Cardiac septum (tissue), 1 donor: ENCODE measurements at regions of chr3 and their contacts with region 1.

Region 1: GRCh38 chr3:139111392-139112229 is 66.9 kb upstream of the PRR23C start:
- DNase-seq: peak; percentile 76

Region 2: GRCh38 chr3:139202226-139202958 is 90.8 kb after region 1 on chr3:
- intact Hi-C with region 1: loop called (anchors 5 kb)
- DNase-seq: no peak

Region 3: GRCh38 chr3:139329345-139329850 is 217.8 kb after region 1 on chr3:
- intact Hi-C with region 1: loop called (anchors 2 kb)
- DNase-seq: peak; percentile 92